ENCODE measurements at regions of chr17 and their contacts with region 1.

Region 1: GRCh38 chr17:7862692-7863437 is 5.1 kb downstream of the CYB5D1 start:
- DNase-seq: peak; percentile 72
- H3K4me3 ChIP-seq: no peak overlapping the region
- H3K27ac ChIP-seq: peak overlapping the region; percentile 34 to 67
- H3K4me1 ChIP-seq: peaks cover 13% of the 10 kb centered on the region
- H3K27me3 ChIP-seq: no peaks in the 10 kb centered on the region
- CTCF ChIP-seq: peak; percentile 81 to 95 (median 86)
- POLR2A ChIP-seq: no peak

Region 2: GRCh38 chr17:7825206-7825990 is 37.5 kb before region 1 on chr17:
- intact Hi-C with region 1: no loop called
- DNase-seq: no peak
- H3K4me3 ChIP-seq: no peak overlapping the region
- H3K27ac ChIP-seq: no peak overlapping the region
- H3K4me1 ChIP-seq: no peaks in the 10 kb centered on the region
- H3K27me3 ChIP-seq: no peaks in the 10 kb centered on the region
- CTCF ChIP-seq: no peak
- POLR2A ChIP-seq: no peak

Region 3: DNA sequence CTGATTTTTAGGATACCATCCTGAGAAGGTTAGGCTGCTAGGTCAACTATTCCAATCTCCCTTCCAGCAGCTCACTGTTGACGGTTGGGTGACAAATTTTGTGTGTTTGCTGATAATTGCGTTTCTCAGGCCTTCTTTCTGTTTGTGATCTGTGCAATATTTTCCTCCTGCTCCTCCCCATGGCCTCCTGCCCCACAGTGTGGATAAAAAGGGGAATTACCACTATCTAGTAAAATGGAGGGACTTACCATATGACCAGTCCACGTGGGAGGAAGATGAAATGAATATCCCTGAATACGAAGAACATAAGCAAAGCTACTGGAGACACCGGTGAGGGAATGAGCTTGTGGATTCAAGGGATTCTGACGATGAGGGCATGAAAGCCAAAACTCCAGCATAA is 34.9 kb after region 1 on chr17:
- intact Hi-C with region 1: loop called (anchors 5 kb)
- DNase-seq: no peak
- H3K4me3 ChIP-seq: no peak overlapping the region
- H3K27ac ChIP-seq: peak overlapping the region in 1 of 2 donors; percentile 4
- H3K4me1 ChIP-seq: no peaks in the 10 kb centered on the region
- H3K27me3 ChIP-seq: no peaks in the 10 kb centered on the region
- CTCF ChIP-seq: peak in 2 of 4 experiments; percentile 55 to 56
- POLR2A ChIP-seq: no peak

Region 4: DNA sequence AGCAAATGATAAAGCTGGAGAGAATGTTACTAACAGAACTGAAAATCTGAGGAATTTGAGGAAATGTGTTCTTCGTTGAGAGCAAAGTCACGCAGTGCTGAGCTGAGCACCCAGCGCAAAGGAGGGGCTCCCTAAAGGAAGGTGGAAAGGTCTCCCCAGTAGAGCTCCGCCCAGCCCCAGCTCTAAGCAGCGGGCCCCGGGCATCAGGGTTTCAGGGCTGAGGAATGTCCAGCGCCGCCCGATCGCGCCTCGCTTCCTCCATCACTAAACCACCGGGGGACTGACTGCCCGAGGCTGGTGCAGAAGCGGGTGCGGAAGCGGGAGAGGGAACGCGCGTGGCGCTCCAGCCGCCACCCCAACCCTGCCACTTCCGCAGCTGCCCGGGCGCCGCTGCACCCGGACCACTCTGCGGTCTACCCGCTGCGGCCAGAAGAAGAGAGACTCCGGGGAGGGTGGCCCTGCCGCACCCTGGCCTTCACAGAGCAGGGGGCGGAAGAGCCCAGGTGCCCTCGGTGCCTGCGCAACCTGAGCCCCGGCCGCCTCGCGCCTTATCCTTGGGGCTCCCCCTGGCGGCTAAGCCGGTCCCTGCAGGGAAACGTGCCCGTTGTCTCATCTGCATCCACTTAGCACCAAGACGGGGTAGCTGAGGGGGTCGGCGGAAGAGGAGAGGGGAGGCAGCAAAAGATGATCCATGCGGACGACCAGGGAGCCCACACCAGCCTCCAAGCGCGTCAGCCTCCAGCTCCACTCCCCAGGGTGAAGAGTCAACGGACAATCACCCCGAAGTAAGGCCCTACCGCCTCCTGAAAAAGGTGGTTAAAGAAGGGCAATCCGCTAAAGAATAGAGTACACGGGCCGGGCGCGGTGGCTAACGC is 127.2 kb after region 1 on chr17:
- intact Hi-C with region 1: loop called (anchors 2 kb)
- DNase-seq: peak; percentile 79
- H3K4me3 ChIP-seq: peak overlapping the region; percentile 43 to 49
- H3K27ac ChIP-seq: peak overlapping the region; percentile 57 to 67
- H3K4me1 ChIP-seq: no peaks in the 10 kb centered on the region
- H3K27me3 ChIP-seq: no peaks in the 10 kb centered on the region
- CTCF ChIP-seq: peak; percentile 94 to 98 (median 97)
- POLR2A ChIP-seq: no peak

Region 5: DNA sequence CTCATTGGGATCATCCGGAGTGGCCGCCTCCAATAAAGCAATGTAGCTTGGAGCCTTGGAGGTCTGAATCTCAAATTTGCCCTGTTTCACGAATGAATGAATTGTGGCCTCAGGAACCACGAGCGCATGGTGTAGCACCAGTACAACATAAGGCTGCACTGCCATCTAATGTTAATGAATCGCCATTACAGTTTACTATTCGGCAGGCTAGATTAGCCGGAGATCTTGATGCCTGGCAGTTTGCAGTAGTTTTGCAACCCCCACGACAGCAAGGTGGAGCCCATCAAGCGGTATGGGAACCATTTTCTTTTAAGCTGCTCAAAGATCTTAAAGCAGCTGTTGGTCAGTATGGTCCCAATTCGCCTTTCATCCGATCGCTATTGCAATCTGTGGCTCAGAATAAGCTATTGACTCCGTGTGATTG is 194.8 kb after region 1 on chr17:
- intact Hi-C with region 1: loop called (anchors 5 kb)
- DNase-seq: peak; percentile 72
- H3K4me3 ChIP-seq: peak overlapping the region; percentile 29 to 39
- H3K27ac ChIP-seq: peak overlapping the region; percentile 92 to 95
- H3K4me1 ChIP-seq: no peaks in the 10 kb centered on the region
- H3K27me3 ChIP-seq: no peaks in the 10 kb centered on the region
- CTCF ChIP-seq: peak; percentile 24 to 87 (median 78)
- POLR2A ChIP-seq: peak; percentile 5

Region 6: DNA sequence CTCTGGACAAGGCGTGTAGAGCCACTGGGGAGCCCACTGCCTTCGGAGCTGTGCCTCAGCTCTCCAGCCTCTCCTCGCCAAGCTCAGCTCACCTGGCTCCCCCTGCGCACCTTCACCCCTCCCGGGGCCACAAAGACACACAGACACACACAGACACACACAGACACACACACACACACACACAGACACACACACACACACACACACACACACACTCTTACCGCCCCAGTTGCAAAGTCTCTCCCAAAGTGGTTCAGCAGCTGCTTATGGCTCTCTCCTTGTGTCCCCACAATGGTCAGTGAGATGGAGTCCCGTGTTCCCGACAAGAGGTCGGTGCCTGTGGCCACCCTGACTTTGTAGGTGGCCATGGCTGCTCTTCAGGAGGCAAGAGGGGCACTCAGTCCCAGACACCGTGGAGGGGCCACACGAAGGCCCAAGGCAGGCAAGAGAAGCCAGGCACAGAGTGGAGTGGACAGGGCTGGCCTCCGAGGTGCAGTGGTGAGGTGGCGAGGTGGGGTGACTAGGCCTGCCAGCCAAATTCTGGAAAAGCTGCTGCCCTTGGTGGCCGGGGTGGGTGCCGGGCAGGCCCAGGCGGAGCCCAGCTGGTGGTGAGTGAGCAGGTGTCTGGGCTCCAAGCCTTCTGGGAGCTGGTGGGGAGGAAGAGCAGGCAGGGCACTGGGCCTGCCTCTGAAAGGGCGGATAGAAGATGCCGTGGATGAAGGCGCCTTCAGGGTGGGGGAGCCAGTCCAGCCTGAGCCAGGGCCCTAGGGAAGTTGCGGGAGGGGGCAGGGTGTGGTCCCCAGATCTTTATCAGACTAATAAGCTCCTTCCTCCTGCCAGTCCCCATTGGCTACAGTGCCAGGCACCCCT is 224.4 kb after region 1 on chr17 and contains the start of gene ALOX12B:
- intact Hi-C with region 1: no loop called
- DNase-seq: no peak
- H3K4me3 ChIP-seq: no peak within 1 kb of the TSS
- H3K27ac ChIP-seq: no peak within 1 kb of the TSS
- H3K4me1 ChIP-seq: no peaks in the 10 kb centered on the region
- H3K27me3 ChIP-seq: no peaks in the 10 kb centered on the region
- CTCF ChIP-seq: no peak
- POLR2A ChIP-seq: no peak
- total RNA-seq, gene ALOX12B: 0.18 to 0.40 TPM

Measured in prostate gland (tissue), 2 donors.